CD4-positive, alpha-beta T cell (primary cell): ENCODE measurements at regions of chr12 and their contacts with region 1.

Region 1: DNA sequence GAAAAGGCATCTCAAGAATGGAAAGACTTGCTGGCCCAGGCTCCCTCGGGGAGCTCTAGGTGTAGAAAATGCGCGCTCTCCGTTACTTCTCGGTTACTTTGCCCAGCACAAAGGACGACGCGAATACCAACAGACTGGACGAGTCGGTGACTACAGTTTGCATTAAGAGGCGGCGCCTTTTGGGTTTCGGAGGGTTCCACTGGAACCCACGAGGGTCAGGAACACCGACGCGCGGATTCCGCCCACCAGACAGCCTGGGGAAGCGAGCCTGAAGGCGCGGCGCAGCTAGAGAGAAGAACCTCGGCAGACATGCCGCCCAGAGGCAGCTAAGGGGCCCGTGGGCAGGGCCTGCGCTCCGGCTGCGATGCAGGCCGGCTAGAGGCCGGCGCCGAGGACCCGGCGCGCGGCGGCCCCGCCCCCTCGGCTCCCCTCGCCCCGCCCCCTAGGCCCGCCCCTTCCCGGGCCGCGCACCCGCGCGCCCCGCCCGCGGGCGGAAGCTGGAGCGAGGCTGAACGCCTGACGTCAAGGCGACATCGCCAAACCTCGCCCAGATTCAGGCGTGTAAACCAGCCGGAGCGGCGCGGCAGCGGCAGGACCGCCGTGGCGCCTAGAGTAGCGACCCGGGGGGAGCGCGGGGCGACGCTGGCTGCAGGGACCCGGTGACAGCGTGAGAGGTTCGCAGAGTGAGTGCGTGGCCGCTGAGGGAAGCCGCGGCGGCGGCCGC is at the start of gene RAP1B:
- DNase-seq: peak; percentile 78 to 96 (median 88)
- ATAC-seq: peak; percentile 74
- H3K4me3 ChIP-seq: peak within 1 kb of the TSS; percentile 98
- H3K4me3 Mint-ChIP-seq: peak within 1 kb of the TSS; percentile 95
- H3K27ac ChIP-seq: peak within 1 kb of the TSS; percentile 93 to 96
- H3K27ac Mint-ChIP-seq: peak within 1 kb of the TSS; percentile 94
- H3K4me1 ChIP-seq: peaks cover 19% of the 10 kb centered on the region
- H3K4me1 Mint-ChIP-seq: peaks cover 43% of the 10 kb centered on the region
- H3K27me3 ChIP-seq: no peaks in the 10 kb centered on the region
- H3K27me3 Mint-ChIP-seq: no peaks in the 10 kb centered on the region
- CTCF ChIP-seq: no peak
- total RNA-seq, gene RAP1B: 256 to 261 TPM

Region 2: GRCh38 chr12:68020699-68021098 is 589.8 kb before region 1 on chr12:
- CTCF ChIA-PET with region 1: no interaction called
- POLR2A ChIA-PET with region 1: no interaction called
- intact Hi-C with region 1: no loop called
- DNase-seq: no peak
- ATAC-seq: no peak
- H3K4me3 ChIP-seq: no peak overlapping the region
- H3K4me3 Mint-ChIP-seq: no peak overlapping the region
- H3K27ac ChIP-seq: no peak overlapping the region
- H3K27ac Mint-ChIP-seq: no peak overlapping the region
- H3K4me1 ChIP-seq: no peaks in the 10 kb centered on the region
- H3K4me1 Mint-ChIP-seq: no peaks in the 10 kb centered on the region
- H3K27me3 ChIP-seq: no peaks in the 10 kb centered on the region
- H3K27me3 Mint-ChIP-seq: no peaks in the 10 kb centered on the region
- CTCF ChIP-seq: no peak

Region 3: GRCh38 chr12:68497702-68498101 is 112.8 kb before region 1 on chr12:
- CTCF ChIA-PET with region 1: no interaction called
- POLR2A ChIA-PET with region 1: interaction called, 12 read pairs
- intact Hi-C with region 1: no loop called
- DNase-seq: peak in 1 of 14 experiments; percentile 44
- ATAC-seq: no peak
- H3K4me3 ChIP-seq: no peak overlapping the region
- H3K4me3 Mint-ChIP-seq: peak overlapping the region; percentile 31
- H3K27ac ChIP-seq: no peak overlapping the region
- H3K27ac Mint-ChIP-seq: no peak overlapping the region
- H3K4me1 ChIP-seq: no peaks in the 10 kb centered on the region
- H3K4me1 Mint-ChIP-seq: peaks cover 31% of the 10 kb centered on the region
- H3K27me3 ChIP-seq: no peaks in the 10 kb centered on the region
- H3K27me3 Mint-ChIP-seq: no peaks in the 10 kb centered on the region
- CTCF ChIP-seq: no peak

Region 4: DNA sequence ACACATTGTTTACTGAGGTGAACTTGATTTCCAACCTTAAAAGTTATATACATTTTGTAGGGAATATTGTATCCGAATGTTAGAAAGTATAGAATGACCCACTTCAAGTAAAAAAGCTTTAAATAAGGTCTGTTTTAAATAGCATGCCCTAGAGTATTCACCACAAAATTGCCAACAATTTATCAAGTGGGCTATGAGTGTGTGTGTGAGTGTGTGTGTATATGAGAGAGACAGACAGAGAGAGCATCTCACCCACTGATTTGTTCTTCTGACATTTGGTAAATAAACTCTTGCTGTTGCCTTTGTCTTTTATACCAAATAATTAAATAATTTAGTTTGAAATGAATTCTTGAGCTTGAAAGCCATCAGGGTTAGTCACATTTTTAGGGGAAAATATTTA is 29.6 kb before region 1 on chr12:
- CTCF ChIA-PET with region 1: interaction called, 3 read pairs
- POLR2A ChIA-PET with region 1: interaction called, 34 read pairs
- intact Hi-C with region 1: no loop called
- DNase-seq: no peak
- ATAC-seq: no peak
- H3K4me3 ChIP-seq: no peak overlapping the region
- H3K4me3 Mint-ChIP-seq: no peak overlapping the region
- H3K27ac ChIP-seq: no peak overlapping the region
- H3K27ac Mint-ChIP-seq: no peak overlapping the region
- H3K4me1 ChIP-seq: peaks cover 11% of the 10 kb centered on the region
- H3K4me1 Mint-ChIP-seq: peaks cover 46% of the 10 kb centered on the region
- H3K27me3 ChIP-seq: no peaks in the 10 kb centered on the region
- H3K27me3 Mint-ChIP-seq: no peaks in the 10 kb centered on the region
- CTCF ChIP-seq: no peak

Region 5: DNA sequence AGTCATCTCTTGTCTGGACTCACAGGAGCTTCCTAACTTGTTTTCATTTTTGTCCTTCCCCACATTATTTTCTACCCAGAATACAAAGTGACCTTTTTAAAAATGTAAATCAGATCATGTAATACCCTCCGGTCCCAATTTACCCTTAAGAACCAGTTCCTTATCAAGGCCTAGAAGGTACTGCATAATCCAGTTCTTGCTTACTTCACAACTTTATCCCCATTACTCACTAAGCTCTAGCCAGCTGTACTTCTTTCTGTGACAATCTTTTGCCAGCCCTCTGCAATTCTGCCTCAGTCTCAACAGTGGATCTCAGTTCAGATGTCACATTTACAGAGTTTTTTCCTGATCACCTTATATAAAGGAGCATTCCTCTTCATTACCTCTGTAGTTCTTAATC is 11.7 kb after region 1 on chr12:
- CTCF ChIA-PET with region 1: interaction called, 3 read pairs
- POLR2A ChIA-PET with region 1: interaction called, 20 read pairs
- intact Hi-C with region 1: loop called in 1 of 2 experiments (anchors 1 kb)
- DNase-seq: no peak
- ATAC-seq: no peak
- H3K4me3 ChIP-seq: no peak overlapping the region
- H3K4me3 Mint-ChIP-seq: peak overlapping the region; percentile 49
- H3K27ac ChIP-seq: peak overlapping the region in 1 of 2 donors; percentile 1
- H3K27ac Mint-ChIP-seq: peak overlapping the region; percentile 37
- H3K4me1 ChIP-seq: peaks cover 57% of the 10 kb centered on the region
- H3K4me1 Mint-ChIP-seq: peaks cover 90% of the 10 kb centered on the region
- H3K27me3 ChIP-seq: no peaks in the 10 kb centered on the region
- H3K27me3 Mint-ChIP-seq: no peaks in the 10 kb centered on the region
- CTCF ChIP-seq: no peak

Region 6: GRCh38 chr12:68648179-68648578 is 37.6 kb after region 1 on chr12:
- CTCF ChIA-PET with region 1: no interaction called
- POLR2A ChIA-PET with region 1: interaction called, 6 read pairs
- intact Hi-C with region 1: loop called in 1 of 2 experiments (anchors 5 kb)
- DNase-seq: no peak
- ATAC-seq: peak; percentile 65
- H3K4me3 ChIP-seq: no peak overlapping the region
- H3K4me3 Mint-ChIP-seq: peak overlapping the region; percentile 13
- H3K27ac ChIP-seq: no peak overlapping the region
- H3K27ac Mint-ChIP-seq: peak overlapping the region; percentile 81
- H3K4me1 ChIP-seq: peaks cover 22% of the 10 kb centered on the region
- H3K4me1 Mint-ChIP-seq: peaks cover 74% of the 10 kb centered on the region
- H3K27me3 ChIP-seq: no peaks in the 10 kb centered on the region
- H3K27me3 Mint-ChIP-seq: no peaks in the 10 kb centered on the region
- CTCF ChIP-seq: no peak

Region 7: DNA sequence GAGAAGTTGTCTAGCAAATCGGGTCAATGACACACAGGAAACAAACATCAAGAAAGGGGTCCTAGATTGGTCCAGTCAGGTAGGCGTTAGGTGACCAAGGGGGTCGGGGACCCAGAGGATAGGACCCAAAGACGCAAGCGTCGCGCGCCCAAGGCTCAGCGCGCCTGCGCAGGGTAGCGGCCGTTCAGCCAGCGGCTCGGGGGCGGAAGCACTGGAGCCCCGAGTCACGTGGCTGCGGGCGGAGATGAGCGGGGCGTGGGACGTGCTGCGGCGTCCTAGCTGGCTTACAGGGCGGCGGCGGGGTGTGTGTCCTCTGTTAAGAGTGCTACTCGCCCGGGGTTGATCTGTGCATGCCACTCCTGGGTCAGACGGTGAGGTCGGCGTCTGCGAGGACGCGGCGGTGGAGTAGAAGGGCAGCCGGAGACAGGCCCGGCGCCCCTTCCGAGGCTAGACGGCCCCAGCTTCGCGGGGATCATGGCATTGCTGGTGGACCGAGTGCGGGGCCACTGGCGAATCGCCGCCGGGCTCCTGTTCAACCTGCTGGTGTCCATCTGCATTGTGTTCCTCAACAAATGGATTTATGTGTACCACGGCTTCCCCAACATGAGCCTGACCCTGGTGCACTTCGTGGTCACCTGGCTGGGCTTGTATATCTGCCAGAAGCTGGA is 135.5 kb after region 1 on chr12 and contains the start of gene SLC35E3:
- CTCF ChIA-PET with region 1: interaction called, 3 read pairs
- POLR2A ChIA-PET with region 1: interaction called, 8 read pairs
- intact Hi-C with region 1: loop called (anchors 5 to 10 kb)
- DNase-seq: peak; percentile 81 to 95 (median 88)
- ATAC-seq: peak; percentile 98
- H3K4me3 ChIP-seq: peak within 1 kb of the TSS; percentile 90
- H3K4me3 Mint-ChIP-seq: peak within 1 kb of the TSS; percentile 93
- H3K27ac ChIP-seq: peak within 1 kb of the TSS; percentile 22 to 73
- H3K27ac Mint-ChIP-seq: peak within 1 kb of the TSS; percentile 95
- H3K4me1 ChIP-seq: peaks cover 19% of the 10 kb centered on the region
- H3K4me1 Mint-ChIP-seq: peaks cover 47% of the 10 kb centered on the region
- H3K27me3 ChIP-seq: no peaks in the 10 kb centered on the region
- H3K27me3 Mint-ChIP-seq: no peaks in the 10 kb centered on the region
- CTCF ChIP-seq: no peak
- total RNA-seq, gene SLC35E3: 3.5 to 6.1 TPM

Region 8: GRCh38 chr12:69266036-69266635 is 655.6 kb after region 1 on chr12:
- CTCF ChIA-PET with region 1: no interaction called
- POLR2A ChIA-PET with region 1: no interaction called
- intact Hi-C with region 1: no loop called
- DNase-seq: no peak
- ATAC-seq: no peak
- H3K4me3 ChIP-seq: no peak overlapping the region
- H3K4me3 Mint-ChIP-seq: no peak overlapping the region
- H3K27ac ChIP-seq: no peak overlapping the region
- H3K27ac Mint-ChIP-seq: no peak overlapping the region
- H3K4me1 ChIP-seq: no peaks in the 10 kb centered on the region
- H3K4me1 Mint-ChIP-seq: peaks cover 10% of the 10 kb centered on the region
- H3K27me3 ChIP-seq: no peaks in the 10 kb centered on the region
- H3K27me3 Mint-ChIP-seq: no peaks in the 10 kb centered on the region
- CTCF ChIP-seq: no peak

Region 9: DNA sequence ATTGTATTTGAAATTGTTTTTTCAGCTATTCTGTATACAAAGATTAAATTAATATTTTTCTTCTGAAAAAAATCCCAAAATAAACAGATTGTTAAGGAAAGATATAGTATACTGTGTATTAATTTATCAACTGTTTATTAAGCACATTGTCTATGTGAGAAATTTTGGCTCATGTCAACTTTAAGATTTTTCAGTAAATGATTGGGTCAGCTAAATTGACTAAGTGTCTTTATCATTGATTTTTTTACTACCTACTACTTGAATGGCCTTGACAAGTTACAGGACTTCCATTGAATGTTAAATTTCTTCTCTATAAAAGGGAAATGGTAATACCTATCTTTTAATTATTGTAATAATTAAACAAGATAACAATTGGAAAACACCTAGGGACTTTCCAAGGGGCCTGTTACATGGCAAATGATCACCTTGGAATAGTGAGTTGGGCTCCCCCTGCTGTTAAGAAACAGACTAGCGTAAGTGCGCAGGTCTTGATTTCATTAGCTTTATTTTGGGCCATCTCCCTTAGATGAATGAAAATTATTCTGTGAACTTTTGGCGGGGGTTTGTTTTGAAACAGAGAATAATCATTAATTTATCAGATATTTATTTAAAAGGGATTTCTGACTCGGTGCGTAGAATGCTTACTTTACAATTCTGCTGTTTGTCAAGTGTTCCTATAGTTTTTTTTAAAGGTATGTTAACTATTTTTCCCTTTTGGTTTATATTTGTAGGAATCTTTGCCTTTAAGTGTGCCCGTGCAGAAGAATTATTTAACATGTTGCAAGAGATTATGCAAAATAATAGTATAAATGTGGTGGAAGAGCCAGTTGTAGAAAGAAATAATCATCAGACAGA is 960.2 kb after region 1 on chr12:
- CTCF ChIA-PET with region 1: no interaction called
- POLR2A ChIA-PET with region 1: no interaction called
- intact Hi-C with region 1: no loop called
- DNase-seq: peak; percentile 15 to 87 (median 36)
- ATAC-seq: peak; percentile 88
- H3K4me3 ChIP-seq: no peak overlapping the region
- H3K4me3 Mint-ChIP-seq: no peak overlapping the region
- H3K27ac ChIP-seq: no peak overlapping the region
- H3K27ac Mint-ChIP-seq: no peak overlapping the region
- H3K4me1 ChIP-seq: no peaks in the 10 kb centered on the region
- H3K4me1 Mint-ChIP-seq: no peaks in the 10 kb centered on the region
- H3K27me3 ChIP-seq: no peaks in the 10 kb centered on the region
- H3K27me3 Mint-ChIP-seq: no peaks in the 10 kb centered on the region
- CTCF ChIP-seq: peak; percentile 92